Activated CD8-positive, alpha-beta T cell treated with anti-CD3 and anti-CD28 coated beads for 36 hours (primary cell): ENCODE measurements at regions of chr3 and their contacts with region 1.

Region 1: DNA sequence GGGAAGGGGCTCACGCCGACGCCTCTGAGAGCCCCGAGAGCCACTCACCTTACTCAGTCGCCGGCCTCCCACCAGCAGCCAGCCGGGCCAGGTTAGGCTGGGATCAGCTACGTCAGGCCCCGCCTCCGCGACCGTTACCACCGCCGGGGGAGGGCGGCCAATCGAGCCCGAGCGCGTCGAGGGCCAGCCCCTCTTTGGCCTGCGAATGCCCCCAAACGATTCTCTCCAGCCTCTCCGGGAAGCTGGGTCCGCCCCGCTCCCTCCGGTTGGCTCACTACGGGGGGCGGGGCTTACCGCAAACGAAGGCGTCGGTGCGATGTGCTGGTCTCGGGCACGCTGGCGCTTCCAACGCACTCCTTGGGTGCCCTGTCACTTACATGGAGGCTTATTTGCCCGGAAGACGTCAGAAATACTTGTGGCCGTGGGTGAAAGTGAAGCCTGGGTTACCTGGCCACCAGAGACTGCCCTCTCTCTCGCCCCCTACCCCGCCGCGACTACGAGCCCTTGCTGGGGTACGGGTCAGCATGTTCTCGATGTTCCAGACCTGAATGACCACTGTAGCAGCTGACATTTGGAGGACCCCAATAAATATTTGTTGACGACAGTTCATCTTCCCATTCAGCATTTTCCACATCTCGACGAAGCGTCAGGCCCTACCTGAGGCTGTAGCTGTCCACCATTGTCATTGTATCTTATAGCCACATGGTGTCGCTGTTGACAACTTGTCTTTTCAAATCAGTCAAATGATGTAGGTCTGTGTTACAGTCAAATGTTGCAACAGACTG is at the start of gene CEP70:
- DNase-seq: peak; percentile 95
- ATAC-seq: peak; percentile 96
- H3K4me3 Mint-ChIP-seq: peak within 1 kb of the TSS; percentile 80
- H3K27ac Mint-ChIP-seq: peak within 1 kb of the TSS; percentile 91
- H3K4me1 Mint-ChIP-seq: no peaks in the 10 kb centered on the region
- H3K27me3 Mint-ChIP-seq: no peaks in the 10 kb centered on the region
- CTCF ChIP-seq: peak; percentile 85
- total RNA-seq, gene CEP70: 11.5 to 14.8 TPM

Region 2: DNA sequence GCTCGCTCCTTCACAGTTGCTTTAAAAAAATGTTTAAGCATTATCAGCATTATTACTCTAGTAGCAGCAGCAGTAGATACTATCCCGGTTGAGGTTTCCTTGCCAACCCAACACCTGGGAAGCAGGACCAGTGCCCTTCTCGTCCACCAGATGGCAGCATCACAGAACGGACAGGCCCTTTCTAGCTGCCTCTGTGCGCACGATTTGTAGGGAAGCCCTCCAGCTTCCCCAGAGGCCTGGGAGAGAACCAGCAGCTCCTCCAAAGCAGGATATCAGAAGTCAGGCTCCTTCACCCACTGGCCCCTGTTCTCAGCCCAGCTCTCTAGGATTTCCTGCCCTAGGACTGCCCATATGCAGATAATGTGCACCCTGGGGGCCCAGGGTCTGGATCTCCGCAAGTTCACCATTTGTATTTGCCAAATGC is 176.8 kb before region 1 on chr3:
- CTCF ChIA-PET with region 1: interaction called, 11 read pairs
- POLR2A ChIA-PET with region 1: no interaction called
- intact Hi-C with region 1: no loop called
- DNase-seq: peak; percentile 77
- ATAC-seq: peak; percentile 87
- H3K4me3 Mint-ChIP-seq: no peak overlapping the region
- H3K27ac Mint-ChIP-seq: no peak overlapping the region
- H3K4me1 Mint-ChIP-seq: peaks cover 4% of the 10 kb centered on the region
- H3K27me3 Mint-ChIP-seq: peaks cover 5% of the 10 kb centered on the region
- CTCF ChIP-seq: peak; percentile 80

Region 3: DNA sequence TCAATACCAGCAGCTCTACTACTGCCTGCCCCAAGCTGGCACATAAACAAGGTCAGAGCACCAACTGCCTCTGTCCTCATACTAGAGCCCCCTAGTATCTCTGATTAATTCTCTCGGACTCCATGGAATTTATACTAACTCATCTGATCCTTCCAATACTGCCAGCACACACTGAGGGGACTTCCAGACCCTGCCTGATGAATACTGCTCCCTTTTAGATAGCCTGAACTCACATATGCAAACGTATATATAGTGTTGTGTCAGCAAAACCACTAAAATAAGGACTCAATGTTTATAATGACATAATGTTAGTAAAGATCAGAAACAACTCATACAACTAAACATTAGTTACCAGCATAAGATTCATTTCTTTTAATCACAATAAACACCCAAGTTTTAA is 25.3 kb before region 1 on chr3:
- CTCF ChIA-PET with region 1: interaction called, 19 read pairs
- POLR2A ChIA-PET with region 1: interaction called, 6 read pairs
- intact Hi-C with region 1: no loop called
- DNase-seq: no peak
- ATAC-seq: no peak
- H3K4me3 Mint-ChIP-seq: no peak overlapping the region
- H3K27ac Mint-ChIP-seq: no peak overlapping the region
- H3K4me1 Mint-ChIP-seq: peaks cover 7% of the 10 kb centered on the region
- H3K27me3 Mint-ChIP-seq: no peaks in the 10 kb centered on the region
- CTCF ChIP-seq: no peak

Region 4: DNA sequence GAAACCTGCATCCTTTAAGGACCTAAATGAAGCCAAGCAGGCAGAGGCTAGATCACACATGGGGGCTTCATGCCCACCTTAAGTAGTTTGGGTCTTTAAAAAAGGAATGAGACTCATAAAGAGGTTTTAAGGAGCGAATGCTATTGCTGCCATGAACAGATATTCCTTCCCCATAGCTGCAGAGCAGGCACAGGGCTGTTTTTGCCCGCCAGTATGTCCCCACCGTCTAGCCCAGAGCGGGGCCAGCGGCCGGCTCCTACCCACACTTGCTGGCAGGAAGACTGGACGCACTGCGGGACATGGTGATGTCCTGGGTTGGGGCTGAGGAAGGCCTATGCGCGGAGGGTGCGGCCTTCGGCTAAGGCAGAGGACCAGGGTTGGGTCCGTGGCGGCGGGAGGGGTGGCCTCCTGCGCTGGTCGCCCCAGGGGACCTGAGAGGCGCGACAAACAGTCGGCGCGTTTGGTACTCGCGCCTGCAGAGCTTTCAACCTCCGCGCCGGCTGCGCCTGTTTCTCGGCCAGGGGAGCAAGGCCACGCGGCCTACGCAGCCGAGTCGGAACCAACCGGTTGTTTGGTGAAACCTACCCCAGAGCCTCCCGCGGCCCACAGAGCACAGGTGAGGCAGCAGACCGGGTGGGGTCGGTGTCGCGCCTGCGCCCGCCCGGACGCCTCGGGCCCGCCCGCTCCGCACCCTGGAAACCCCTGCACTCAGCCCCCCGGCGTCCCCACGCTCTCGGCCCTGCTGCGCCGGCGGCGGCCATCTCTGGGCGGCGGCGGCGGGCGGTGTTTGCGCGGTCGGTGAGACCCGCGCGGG is 14.2 kb after region 1 on chr3 and contains the start of gene FAIM:
- CTCF ChIA-PET with region 1: interaction called, 22 read pairs
- POLR2A ChIA-PET with region 1: interaction called, 16 read pairs
- intact Hi-C with region 1: no loop called
- DNase-seq: peak; percentile 74
- ATAC-seq: peak; percentile 76
- H3K4me3 Mint-ChIP-seq: peak within 1 kb of the TSS; percentile 76
- H3K27ac Mint-ChIP-seq: peak within 1 kb of the TSS; percentile 95
- H3K4me1 Mint-ChIP-seq: peaks cover 12% of the 10 kb centered on the region
- H3K27me3 Mint-ChIP-seq: no peaks in the 10 kb centered on the region
- CTCF ChIP-seq: no peak
- total RNA-seq, gene FAIM: 6.0 TPM

Region 5: GRCh38 chr3:138670407-138670806 is 76.1 kb after region 1 on chr3:
- CTCF ChIA-PET with region 1: no interaction called
- POLR2A ChIA-PET with region 1: no interaction called
- intact Hi-C with region 1: no loop called
- DNase-seq: no peak
- ATAC-seq: no peak
- H3K4me3 Mint-ChIP-seq: no peak overlapping the region
- H3K27ac Mint-ChIP-seq: no peak overlapping the region
- H3K4me1 Mint-ChIP-seq: no peaks in the 10 kb centered on the region
- H3K27me3 Mint-ChIP-seq: no peaks in the 10 kb centered on the region
- CTCF ChIP-seq: no peak

Region 6: DNA sequence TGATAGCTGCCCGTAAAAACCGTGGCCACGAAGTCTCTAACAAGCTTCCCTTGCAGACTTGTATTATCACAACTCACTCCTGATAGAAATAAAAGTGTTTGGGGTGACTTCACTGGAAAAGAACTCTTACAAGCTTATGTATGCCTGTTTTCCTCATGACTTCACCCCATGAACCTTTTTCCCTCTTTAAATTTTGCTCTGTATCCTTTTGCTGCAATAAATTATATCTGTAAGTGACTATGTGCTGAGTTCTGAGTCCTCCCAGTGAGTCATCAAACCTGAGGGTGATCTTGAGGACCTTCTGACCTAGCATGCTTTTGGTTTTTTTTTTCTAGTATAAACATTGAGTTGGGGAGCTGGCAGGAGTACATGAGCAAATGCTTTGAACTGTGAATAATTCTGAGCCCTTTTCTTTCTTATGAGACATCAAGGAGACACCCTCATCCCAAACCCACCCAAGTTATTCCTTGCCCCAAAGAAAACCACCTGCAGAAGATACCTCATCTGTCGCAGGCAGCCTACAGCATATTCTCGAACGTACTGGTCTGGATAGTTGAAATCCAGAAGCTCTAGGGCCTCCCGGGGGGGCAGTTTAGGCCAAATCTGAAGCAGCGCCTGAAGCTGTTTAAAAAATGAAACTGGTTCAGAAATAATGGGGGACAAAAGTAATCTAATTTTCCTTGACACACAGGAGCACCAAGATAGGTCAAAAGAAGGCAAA is 100.1 kb after region 1 on chr3:
- CTCF ChIA-PET with region 1: interaction called, 13 read pairs
- POLR2A ChIA-PET with region 1: no interaction called
- intact Hi-C with region 1: loop called (anchors 10 kb)
- DNase-seq: no peak
- ATAC-seq: no peak
- H3K4me3 Mint-ChIP-seq: no peak overlapping the region
- H3K27ac Mint-ChIP-seq: no peak overlapping the region
- H3K4me1 Mint-ChIP-seq: no peaks in the 10 kb centered on the region
- H3K27me3 Mint-ChIP-seq: no peaks in the 10 kb centered on the region
- CTCF ChIP-seq: no peak

Region 7: DNA sequence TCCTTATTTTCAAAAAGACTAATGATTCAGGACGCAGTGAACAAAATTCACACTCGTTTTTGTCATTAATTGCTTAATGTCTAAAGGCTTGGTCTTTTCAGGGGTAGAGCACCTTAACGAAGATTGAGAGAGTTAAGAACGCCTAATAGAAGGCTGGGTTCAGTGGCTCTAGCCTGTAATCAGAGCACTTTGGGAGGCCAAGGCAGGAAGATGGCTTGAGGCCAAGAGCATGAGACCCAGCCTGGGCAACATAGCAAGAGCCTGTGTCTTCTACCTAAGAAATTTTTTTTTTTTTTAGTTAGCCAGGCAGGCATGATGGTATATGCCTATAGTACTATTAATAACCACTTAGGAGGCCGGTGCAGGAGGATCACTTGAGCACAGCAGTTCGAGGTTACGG is 232.9 kb after region 1 on chr3:
- CTCF ChIA-PET with region 1: no interaction called
- POLR2A ChIA-PET with region 1: no interaction called
- intact Hi-C with region 1: no loop called
- DNase-seq: no peak
- ATAC-seq: no peak
- H3K4me3 Mint-ChIP-seq: no peak overlapping the region
- H3K27ac Mint-ChIP-seq: no peak overlapping the region
- H3K4me1 Mint-ChIP-seq: peaks cover 10% of the 10 kb centered on the region
- H3K27me3 Mint-ChIP-seq: no peaks in the 10 kb centered on the region
- CTCF ChIP-seq: no peak